AG04450 (cell line): ENCODE measurements at regions of chr12 and their contacts with region 1.

Region 1: DNA sequence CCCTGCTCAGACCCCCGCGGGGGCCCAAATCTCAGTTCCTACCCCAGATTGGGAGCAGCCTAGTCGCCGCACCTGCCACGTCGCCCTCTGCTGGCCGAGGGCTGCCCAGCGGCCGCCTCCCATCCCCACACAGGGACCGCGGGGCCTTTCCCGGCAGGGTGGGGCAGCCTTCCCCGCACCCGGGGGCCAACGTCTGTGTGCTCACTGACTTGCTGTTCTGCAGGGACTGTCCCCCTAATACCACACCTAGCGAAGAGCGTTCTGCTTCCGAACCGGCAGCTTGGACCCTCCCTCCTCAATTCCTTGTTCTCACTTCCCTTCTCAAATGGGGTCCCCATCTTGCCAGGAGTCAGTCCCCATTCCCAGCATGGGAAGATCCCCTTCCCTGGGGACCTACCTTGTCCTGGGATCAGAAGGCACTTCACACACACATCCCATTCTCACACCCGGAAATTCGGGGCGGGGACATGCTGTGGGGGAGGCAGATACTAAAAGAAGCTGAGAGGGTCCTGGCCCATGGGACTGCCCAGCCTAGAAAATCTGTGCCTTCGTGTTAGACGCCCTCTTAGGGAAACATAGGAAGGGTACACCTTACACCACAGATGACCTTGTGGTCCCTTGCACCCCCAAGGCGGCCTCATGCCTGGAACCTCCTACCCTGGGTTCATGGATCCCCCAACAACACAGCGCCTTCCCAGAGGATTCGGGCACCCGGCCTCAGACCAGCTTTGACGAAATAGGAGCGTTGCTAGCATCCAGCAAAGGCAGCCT is 16.4 kb downstream of the ACVRL1 start:
- DNase-seq: no peak
- H3K4me3 ChIP-seq: no peak overlapping the region
- H3K27ac ChIP-seq: no peak overlapping the region
- H3K27me3 ChIP-seq: no peaks in the 10 kb centered on the region
- CTCF ChIP-seq: peak; percentile 82

Region 2: GRCh38 chr12:51793201-51793600 is 130.5 kb before region 1 on chr12:
- CTCF ChIA-PET with region 1: no interaction called
- POLR2A ChIA-PET with region 1: no interaction called
- DNase-seq: peak; percentile 13
- H3K4me3 ChIP-seq: no peak overlapping the region
- H3K27ac ChIP-seq: no peak overlapping the region
- H3K27me3 ChIP-seq: no peaks in the 10 kb centered on the region
- CTCF ChIP-seq: no peak

Region 3: GRCh38 chr12:51891843-51892242 is 31.8 kb before region 1 on chr12:
- CTCF ChIA-PET with region 1: interaction called, 45 read pairs
- POLR2A ChIA-PET with region 1: no interaction called
- DNase-seq: no peak
- H3K4me3 ChIP-seq: no peak overlapping the region
- H3K27ac ChIP-seq: no peak overlapping the region
- H3K27me3 ChIP-seq: no peaks in the 10 kb centered on the region
- CTCF ChIP-seq: peak; percentile 52

Region 4: GRCh38 chr12:51911788-51912711 is 11.6 kb before region 1 on chr12:
- CTCF ChIA-PET with region 1: interaction called, 43 read pairs
- POLR2A ChIA-PET with region 1: interaction called, 4 read pairs
- DNase-seq: no peak
- H3K4me3 ChIP-seq: peak overlapping the region; percentile 22; the same call in 1 of the 2 replicates
- H3K27ac ChIP-seq: peak overlapping the region; percentile 21
- H3K27me3 ChIP-seq: no peaks in the 10 kb centered on the region
- CTCF ChIP-seq: no peak

Region 5: DNA sequence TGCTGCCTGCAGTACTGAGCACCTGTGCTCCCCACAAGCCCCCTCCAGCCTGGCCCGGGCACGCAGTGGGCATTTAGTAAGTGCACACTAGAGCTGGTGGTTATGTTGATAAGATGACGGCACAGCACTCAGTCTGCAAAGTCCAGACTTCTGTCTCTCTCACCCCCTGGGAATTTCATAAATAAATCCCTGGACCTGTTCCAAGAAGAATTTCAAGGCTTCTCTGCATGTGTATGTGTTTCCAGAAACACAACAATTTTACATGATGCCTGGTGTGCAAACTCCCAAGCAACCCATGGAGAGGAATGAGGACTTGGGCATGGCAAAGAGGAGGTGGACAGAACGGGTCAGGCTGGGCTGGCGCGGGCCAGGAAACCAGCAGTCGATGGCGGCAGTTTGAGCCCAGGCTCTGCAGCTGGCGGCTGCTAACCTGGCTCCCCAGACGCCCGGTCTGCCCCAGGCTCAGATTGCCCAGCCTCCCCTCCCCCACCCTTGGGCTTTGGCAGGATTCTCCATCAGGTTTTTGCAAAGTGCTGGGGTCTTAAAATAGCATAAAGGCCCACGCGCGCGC is 17.4 kb after region 1 on chr12:
- CTCF ChIA-PET with region 1: interaction called, 28 read pairs
- POLR2A ChIA-PET with region 1: no interaction called
- DNase-seq: peak; percentile 32
- H3K4me3 ChIP-seq: no peak overlapping the region
- H3K27ac ChIP-seq: no peak overlapping the region
- H3K27me3 ChIP-seq: peaks cover 4% of the 10 kb centered on the region
- CTCF ChIP-seq: no peak

Region 6: DNA sequence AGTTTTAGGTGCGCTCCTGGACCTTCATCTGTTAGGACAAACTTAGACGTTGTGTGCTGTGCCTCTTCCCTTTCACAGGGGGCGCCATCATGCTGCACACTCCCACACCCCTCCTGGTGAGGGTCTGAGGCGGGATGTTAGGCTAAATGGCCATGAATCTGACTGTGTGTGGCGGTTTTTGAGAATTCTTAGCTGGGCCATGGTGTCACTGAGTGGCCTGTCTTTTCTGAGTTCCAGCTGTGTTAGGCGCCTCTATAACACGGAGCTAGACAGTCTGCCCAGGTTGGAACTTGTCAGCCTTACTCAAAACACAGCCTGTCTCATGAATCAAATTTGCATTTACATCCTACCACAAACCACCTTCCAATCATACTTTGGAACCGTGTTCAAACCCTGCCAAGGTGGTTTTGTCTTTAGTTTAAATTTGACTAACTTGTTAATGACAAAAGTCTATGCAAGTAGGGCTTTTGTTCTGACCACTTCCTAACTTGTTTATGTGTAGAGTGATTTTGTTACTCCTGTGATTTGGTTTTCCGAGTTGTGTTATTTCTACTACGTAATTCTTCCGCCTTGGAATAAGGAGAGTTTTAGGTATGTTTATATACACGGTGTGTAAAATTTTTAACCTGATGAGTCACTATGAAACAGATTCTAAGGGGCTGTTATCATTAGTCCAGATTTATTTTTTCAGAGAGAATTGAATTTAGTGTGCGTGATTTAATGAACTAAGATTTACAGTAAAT is 47.4 kb after region 1 on chr12:
- CTCF ChIA-PET with region 1: interaction called, 17 read pairs
- POLR2A ChIA-PET with region 1: no interaction called
- DNase-seq: no peak
- H3K4me3 ChIP-seq: peak overlapping the region; percentile 5; the same call in 1 of the 2 replicates
- H3K27ac ChIP-seq: peak overlapping the region; percentile 79
- H3K27me3 ChIP-seq: no peaks in the 10 kb centered on the region
- CTCF ChIP-seq: peak; percentile 83

Region 7: GRCh38 chr12:52539083-52539820 is 615.6 kb after region 1 on chr12:
- CTCF ChIA-PET with region 1: no interaction called
- POLR2A ChIA-PET with region 1: no interaction called
- DNase-seq: peak; percentile 6
- H3K4me3 ChIP-seq: no peak overlapping the region
- H3K27ac ChIP-seq: no peak overlapping the region
- H3K27me3 ChIP-seq: peaks cover 6% of the 10 kb centered on the region
- CTCF ChIP-seq: no peak